ENCODE measurements at regions of chr14 and their contacts with region 1.

Region 1: DNA sequence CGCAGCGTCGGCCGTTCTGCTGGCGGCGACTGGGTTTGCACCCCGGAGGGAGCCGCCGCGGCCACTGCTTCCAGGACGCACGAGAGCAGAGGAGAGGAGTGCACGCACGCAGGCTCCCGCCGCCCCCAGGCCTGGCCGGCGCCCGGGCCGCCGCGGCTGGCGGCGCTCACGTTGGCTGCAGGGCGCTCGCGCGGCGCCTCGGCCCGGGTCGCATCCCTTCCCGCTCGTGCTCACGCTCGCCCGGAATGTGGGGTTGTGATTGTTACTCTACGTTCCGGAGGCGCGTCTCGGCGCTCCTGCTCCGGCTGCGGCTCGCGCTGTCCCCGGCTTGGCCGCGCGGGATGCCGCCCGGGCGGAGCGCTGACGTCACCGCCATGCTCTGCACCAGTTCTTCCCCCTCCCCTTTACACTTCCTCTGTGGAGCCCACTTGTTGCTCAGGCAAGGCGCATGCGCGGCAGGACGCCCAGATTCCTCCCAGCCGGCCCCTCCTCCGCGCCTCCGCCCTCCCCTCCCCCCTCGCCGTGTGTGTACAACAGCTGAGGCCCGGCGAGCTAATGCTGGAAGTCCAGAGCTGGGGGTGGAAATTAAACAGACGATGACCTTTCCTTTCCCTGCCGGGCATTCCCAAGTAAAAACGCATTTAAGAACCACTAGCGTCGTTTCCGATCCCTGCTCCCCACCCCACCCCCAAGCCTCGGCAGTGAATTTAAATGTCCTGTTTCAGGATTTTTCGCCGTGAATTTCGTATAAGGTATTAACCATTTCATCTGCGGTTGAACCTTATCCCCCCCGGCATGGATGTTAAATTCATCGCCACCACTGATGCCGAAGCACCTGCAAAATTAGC is at the start of gene IRF2BPL:
- DNase-seq: peak; percentile 98
- H3K4me3 Mint-ChIP-seq: peak within 1 kb of the TSS; percentile 81
- H3K27ac Mint-ChIP-seq: peak within 1 kb of the TSS; percentile 88
- H3K4me1 Mint-ChIP-seq: peaks cover 28% of the 10 kb centered on the region
- H3K27me3 Mint-ChIP-seq: no peaks in the 10 kb centered on the region
- CTCF ChIP-seq: no peak
- total RNA-seq, gene IRF2BPL: 22.1 and 26.0 TPM in 2 replicates

Region 2: DNA sequence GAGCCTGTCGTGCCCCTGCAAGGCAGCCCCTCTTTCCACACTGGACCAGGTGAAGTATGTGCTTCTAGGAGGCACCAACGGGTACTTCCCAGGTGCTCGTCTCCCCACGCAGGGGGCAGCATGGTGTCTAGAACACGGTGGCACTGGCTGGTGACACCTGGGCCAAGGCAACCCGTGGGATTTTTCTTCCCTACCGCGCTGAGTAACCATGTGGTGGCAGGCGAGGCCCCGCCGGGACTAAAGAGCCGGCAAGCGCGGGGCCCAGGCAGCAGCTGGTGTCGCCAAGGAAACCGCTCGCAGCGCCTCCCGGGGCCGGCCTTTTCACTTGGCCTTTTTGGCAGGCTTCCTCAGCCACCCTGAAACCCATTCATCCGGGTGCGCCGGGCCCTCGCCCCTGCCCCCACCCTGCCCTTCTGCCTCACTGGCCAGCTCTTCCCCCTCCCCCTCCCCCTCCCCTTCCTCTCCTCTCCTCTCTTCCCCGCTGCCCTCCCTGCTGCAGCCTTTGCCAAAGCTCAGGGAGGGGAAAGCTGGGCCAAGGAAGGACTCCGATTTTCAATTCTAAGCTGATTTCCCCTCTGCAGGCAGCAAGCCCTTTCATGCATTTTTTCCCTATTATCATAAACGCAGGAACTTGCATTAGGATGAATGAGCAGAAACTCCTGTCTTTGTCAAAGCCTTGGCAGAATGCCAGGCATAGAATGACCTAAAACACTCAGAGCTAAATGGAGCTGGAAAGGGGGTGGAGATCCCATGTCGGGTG is 81.3 kb before region 1 on chr14:
- CTCF ChIA-PET with region 1: interaction called, 9 read pairs
- POLR2A ChIA-PET with region 1: interaction called, 325 read pairs
- intact Hi-C with region 1: loop called (anchors 1 kb)
- DNase-seq: peak; percentile 88
- H3K4me3 Mint-ChIP-seq: peak overlapping the region; percentile 31
- H3K27ac Mint-ChIP-seq: peak overlapping the region; percentile 94
- H3K4me1 Mint-ChIP-seq: peaks cover 28% of the 10 kb centered on the region
- H3K27me3 Mint-ChIP-seq: no peaks in the 10 kb centered on the region
- CTCF ChIP-seq: peak; percentile 31

Region 3: GRCh38 chr14:77007975-77008421 is 20.6 kb before region 1 on chr14:
- CTCF ChIA-PET with region 1: interaction called, 5 read pairs
- POLR2A ChIA-PET with region 1: interaction called, 38 read pairs
- intact Hi-C with region 1: no loop called
- DNase-seq: peak; percentile 17
- H3K4me3 Mint-ChIP-seq: no peak overlapping the region
- H3K27ac Mint-ChIP-seq: peak overlapping the region; percentile 24
- H3K4me1 Mint-ChIP-seq: peaks cover 53% of the 10 kb centered on the region
- H3K27me3 Mint-ChIP-seq: no peaks in the 10 kb centered on the region
- CTCF ChIP-seq: no peak

Region 4: DNA sequence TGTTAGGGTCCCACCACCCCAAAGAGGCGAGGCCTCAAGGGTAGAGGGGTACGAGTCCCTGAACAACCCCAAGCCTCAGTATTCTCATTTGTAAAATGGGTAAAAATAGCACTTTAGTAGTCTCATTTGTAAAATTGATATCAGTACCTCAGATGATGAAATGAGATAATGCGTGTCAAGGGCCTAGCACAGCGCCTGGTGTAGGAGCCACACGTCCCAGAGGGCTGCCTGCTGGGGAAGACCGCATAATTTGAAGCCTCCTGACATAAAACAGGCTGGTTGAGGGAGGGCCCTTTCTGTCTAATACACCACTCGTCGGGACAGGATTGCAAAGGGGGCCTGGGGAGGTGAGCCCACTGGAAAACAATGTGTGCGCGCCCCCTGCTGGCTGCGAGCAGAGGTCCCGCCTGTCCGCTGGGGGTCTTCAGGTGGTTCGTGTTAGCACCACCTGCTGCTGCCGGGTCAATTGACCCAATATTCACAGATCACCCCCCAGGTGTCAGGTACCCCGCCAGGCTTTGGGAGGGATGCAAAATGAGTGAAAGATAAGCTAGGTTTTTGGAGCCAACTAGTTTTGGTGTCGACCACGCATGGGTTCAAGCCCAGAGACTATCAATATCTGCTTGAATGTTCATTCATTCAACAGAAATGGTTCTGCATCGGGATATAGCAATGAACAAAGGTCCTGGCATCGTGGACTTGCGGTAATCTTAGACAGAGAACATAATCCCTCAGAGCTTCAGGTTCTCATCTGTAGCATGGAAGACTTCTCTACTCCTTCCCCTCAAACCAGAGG is 24.6 kb after region 1 on chr14:
- CTCF ChIA-PET with region 1: interaction called, 12 read pairs
- POLR2A ChIA-PET with region 1: interaction called, 8 read pairs
- intact Hi-C with region 1: loop called (anchors 1 kb)
- DNase-seq: peak; percentile 63
- H3K4me3 Mint-ChIP-seq: no peak overlapping the region
- H3K27ac Mint-ChIP-seq: peak overlapping the region; percentile 90
- H3K4me1 Mint-ChIP-seq: peaks cover 15% of the 10 kb centered on the region
- H3K27me3 Mint-ChIP-seq: no peaks in the 10 kb centered on the region
- CTCF ChIP-seq: peak; percentile 71

Region 5: DNA sequence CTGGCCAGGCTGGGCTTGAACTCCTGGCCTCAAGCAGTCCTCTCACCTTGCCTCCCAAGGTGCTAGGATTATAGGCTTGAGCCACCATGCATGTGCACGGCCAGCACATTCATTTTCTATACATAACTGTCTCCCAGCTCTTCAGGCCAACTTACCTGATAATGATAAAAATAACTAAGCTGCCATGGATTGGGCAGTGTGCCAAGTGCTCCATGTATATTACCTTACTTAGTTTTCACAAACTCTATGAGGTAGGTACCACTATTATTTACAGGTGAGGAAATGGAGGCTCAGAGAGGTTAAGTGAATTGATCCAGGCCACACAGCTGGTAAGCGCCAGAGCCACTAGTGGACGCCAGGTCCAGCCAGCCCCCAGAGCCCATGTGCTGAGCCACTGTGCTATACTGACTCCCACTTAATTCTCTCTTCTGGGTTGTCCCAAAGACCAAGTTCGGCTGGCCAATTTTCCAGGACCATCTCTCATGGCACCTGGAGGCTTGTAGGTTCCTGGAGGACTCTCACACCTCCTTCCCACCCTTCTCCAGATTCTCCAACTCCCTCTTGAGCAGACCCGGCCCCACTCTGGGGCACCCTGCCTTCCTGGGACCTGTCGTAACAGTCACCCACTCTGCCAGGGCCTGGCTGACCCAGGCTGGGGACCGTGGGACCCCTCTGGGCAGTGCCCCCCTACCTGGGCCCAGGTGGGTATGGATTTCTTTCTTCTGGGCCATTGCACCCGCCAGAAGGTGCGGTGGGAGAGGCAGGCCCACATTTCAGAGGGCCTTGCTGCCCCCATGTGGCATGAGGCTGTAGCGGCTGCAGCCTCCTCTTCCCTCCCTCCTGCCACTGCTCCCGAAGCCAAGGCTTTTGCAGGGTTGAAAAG is 39.3 kb after region 1 on chr14:
- CTCF ChIA-PET with region 1: interaction called, 88 read pairs
- POLR2A ChIA-PET with region 1: interaction called, 7 read pairs
- intact Hi-C with region 1: loop called (anchors 1 kb)
- DNase-seq: peak; percentile 74
- H3K4me3 Mint-ChIP-seq: no peak overlapping the region
- H3K27ac Mint-ChIP-seq: no peak overlapping the region
- H3K4me1 Mint-ChIP-seq: peaks cover 23% of the 10 kb centered on the region
- H3K27me3 Mint-ChIP-seq: no peaks in the 10 kb centered on the region
- CTCF ChIP-seq: peak; percentile 87

Measured in MCF 10A (cell line).